ENCODE measurements at regions of chr19 and their contacts with region 1.

Region 1: DNA sequence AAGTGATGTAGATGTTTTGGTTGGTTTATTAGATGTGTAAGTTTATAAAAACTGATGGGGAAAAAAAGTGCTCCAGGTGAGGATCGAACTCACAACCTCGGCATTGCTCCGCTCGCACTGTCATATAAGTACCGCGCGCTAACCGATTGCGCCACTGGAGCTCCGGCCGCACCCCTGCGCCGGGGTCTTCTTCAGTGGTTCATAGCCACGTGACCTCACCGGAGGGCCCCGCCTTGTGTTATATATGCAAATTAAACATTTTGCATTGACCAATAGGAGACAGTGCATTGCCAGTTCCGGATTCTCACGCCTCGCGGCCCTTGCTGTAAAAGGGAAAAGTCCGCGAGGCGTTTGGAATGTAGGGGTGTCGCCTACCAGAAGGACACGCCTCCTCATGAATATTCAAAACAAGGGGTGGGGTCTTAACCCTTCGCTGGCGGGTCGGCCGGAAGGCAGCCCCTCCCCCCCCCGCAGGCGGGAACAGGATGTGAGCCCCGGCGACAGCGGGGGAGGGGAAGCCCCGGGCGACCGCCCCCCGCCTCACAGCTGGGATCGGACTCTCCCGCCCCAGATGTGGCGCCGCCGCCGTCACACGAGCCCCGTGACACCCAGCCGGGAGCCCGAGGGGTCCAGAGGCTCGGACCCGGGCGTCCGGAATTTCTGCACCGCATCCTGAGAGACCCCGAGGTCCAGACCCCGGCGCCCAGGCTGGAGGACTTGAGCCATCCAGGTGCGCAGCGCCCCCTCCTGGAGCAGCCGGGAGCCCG is at the start of gene PLEKHG2:
- DNase-seq: peak; percentile 97
- H3K4me3 ChIP-seq: peak within 1 kb of the TSS; percentile 92
- H3K27ac ChIP-seq: 0 out of 2 replicates have a peak within 1 kb of the TSS, but pooled peaks have one; percentile 93
- H3K4me1 ChIP-seq: peaks cover 30% of the 10 kb centered on the region
- H3K27me3 ChIP-seq: no peaks in the 10 kb centered on the region
- CTCF ChIP-seq: peak; percentile 92
- total RNA-seq, gene PLEKHG2: 26.1 and 32.1 TPM in 2 replicates

Region 2: GRCh38 chr19:39031368-39032062 is 380.8 kb before region 1 on chr19:
- CTCF ChIA-PET with region 1: no interaction called
- POLR2A ChIA-PET with region 1: no interaction called
- intact Hi-C with region 1: loop called (anchors 5 kb)
- DNase-seq: peak; percentile 94 to 99
- H3K4me3 ChIP-seq: peak overlapping the region; percentile 77
- H3K27ac ChIP-seq: peak overlapping the region; percentile 76
- H3K4me1 ChIP-seq: peaks cover 25% of the 10 kb centered on the region
- H3K27me3 ChIP-seq: no peaks in the 10 kb centered on the region
- CTCF ChIP-seq: no peak

Region 3: GRCh38 chr19:39125554-39126311 is 286.6 kb before region 1 on chr19 and contains the start of gene PAK4:
- CTCF ChIA-PET with region 1: no interaction called
- POLR2A ChIA-PET with region 1: no interaction called
- intact Hi-C with region 1: loop called (anchors 1 kb)
- DNase-seq: peak; percentile 92 to 97
- H3K4me3 ChIP-seq: peak within 1 kb of the TSS; percentile 80
- H3K27ac ChIP-seq: peak within 1 kb of the TSS; percentile 27; the same call in 1 of the 2 replicates
- H3K4me1 ChIP-seq: peaks cover 9% of the 10 kb centered on the region
- H3K27me3 ChIP-seq: no peaks in the 10 kb centered on the region
- CTCF ChIP-seq: no peak
- total RNA-seq, gene PAK4: 77.8 and 90.2 TPM in 2 replicates

Region 4: GRCh38 chr19:39277612-39278011 is 134.7 kb before region 1 on chr19:
- CTCF ChIA-PET with region 1: no interaction called
- POLR2A ChIA-PET with region 1: no interaction called
- intact Hi-C with region 1: no loop called
- DNase-seq: peak; percentile 43 to 77
- H3K4me3 ChIP-seq: no peak overlapping the region
- H3K27ac ChIP-seq: no peak overlapping the region
- H3K4me1 ChIP-seq: peaks cover 5% of the 10 kb centered on the region; the same call in 1 of the 2 replicates
- H3K27me3 ChIP-seq: no peaks in the 10 kb centered on the region
- CTCF ChIP-seq: no peak

Region 5: GRCh38 chr19:39341719-39342604 is 70.3 kb before region 1 on chr19 and contains the start of gene SAMD4B:
- CTCF ChIA-PET with region 1: interaction called, 4 read pairs
- POLR2A ChIA-PET with region 1: interaction called, 6 read pairs
- intact Hi-C with region 1: loop called (anchors 1 kb)
- DNase-seq: peak; percentile 87 to 99
- H3K4me3 ChIP-seq: peak within 1 kb of the TSS; percentile 89
- H3K27ac ChIP-seq: peak within 1 kb of the TSS; percentile 34
- H3K4me1 ChIP-seq: peaks cover 16% of the 10 kb centered on the region
- H3K27me3 ChIP-seq: no peaks in the 10 kb centered on the region
- CTCF ChIP-seq: peak; percentile 65
- total RNA-seq, gene SAMD4B: 152 and 163 TPM in 2 replicates

Region 6: GRCh38 chr19:39372047-39372802 is 40.1 kb before region 1 on chr19:
- CTCF ChIA-PET with region 1: no interaction called
- POLR2A ChIA-PET with region 1: no interaction called
- intact Hi-C with region 1: no loop called
- DNase-seq: no peak
- H3K4me3 ChIP-seq: no peak overlapping the region
- H3K27ac ChIP-seq: no peak overlapping the region
- H3K4me1 ChIP-seq: no peaks in the 10 kb centered on the region
- H3K27me3 ChIP-seq: no peaks in the 10 kb centered on the region
- CTCF ChIP-seq: no peak

Region 7: DNA sequence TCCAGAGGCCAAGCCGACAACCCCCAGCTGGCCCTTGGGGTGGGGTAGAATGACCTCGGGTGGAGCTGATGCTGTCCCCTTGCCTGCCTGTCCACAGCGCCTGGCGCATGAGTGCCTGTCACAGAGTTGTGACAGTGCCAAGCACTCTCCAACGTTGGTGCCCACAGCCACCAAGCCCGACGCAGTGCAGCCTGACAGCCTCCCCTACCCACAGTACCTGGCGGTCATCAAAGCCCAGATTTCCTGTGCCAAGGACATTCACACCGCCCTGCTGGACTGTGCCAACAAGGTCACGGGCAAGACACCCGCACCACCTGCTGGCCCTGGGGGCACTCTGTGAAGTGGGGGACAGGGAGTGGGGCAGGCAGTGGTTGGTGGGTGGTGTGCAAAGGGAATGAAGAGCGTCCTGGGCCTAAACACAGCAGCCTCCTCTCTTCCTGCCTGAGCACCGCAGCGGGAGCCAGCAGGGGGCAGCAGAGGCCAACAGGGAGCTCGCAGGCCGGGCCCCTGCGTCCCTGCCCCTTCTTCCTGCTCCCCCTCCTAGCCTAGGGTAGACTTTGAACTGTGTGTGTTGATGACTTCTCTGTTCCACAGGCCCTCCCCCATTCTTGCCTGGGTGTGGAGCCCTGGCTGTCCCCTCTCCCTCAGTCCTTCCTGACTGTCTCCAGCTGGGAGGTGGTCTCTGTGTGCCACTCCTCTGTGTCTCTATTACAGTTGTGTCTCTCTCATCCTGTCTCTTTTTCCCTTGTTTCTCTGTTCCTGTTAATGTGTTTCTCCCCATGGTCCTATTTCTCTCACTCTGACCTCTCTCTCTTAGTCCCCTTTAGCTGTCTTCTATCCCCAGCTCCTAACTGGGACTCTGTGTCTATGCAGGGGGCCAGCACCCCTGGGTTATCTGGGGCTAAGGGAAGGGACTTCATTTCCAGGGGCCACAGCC is 14.7 kb before region 1 on chr19:
- CTCF ChIA-PET with region 1: interaction called, 8 read pairs
- POLR2A ChIA-PET with region 1: interaction called, 18 read pairs
- intact Hi-C with region 1: loop called (anchors 1 kb)
- DNase-seq: peak; percentile 60 to 85
- H3K4me3 ChIP-seq: peak overlapping the region; percentile 17; the same call in 1 of the 2 replicates
- H3K27ac ChIP-seq: peak overlapping the region; percentile 95
- H3K4me1 ChIP-seq: peaks cover 24% of the 10 kb centered on the region
- H3K27me3 ChIP-seq: no peaks in the 10 kb centered on the region
- CTCF ChIP-seq: peak; percentile 93

Region 8: GRCh38 chr19:39445265-39446111 is 33.2 kb after region 1 on chr19 and contains the start of gene SUPT5H:
- CTCF ChIA-PET with region 1: no interaction called
- POLR2A ChIA-PET with region 1: interaction called, 3 read pairs
- intact Hi-C with region 1: loop called (anchors 1 kb)
- DNase-seq: peak; percentile 94 to 95
- H3K4me3 ChIP-seq: peak within 1 kb of the TSS; percentile 83
- H3K27ac ChIP-seq: peak within 1 kb of the TSS; percentile 97
- H3K4me1 ChIP-seq: peaks cover 30% of the 10 kb centered on the region
- H3K27me3 ChIP-seq: no peaks in the 10 kb centered on the region
- CTCF ChIP-seq: no peak
- total RNA-seq, gene SUPT5H: 99.7 and 118 TPM in 2 replicates

Region 9: GRCh38 chr19:39532233-39533002 is 120.1 kb after region 1 on chr19 and contains the start of gene EID2B:
- CTCF ChIA-PET with region 1: no interaction called
- POLR2A ChIA-PET with region 1: no interaction called
- intact Hi-C with region 1: loop called (anchors 1 kb)
- DNase-seq: peak; percentile 82 to 92
- H3K4me3 ChIP-seq: peak within 1 kb of the TSS; percentile 91
- H3K27ac ChIP-seq: no peak within 1 kb of the TSS
- H3K4me1 ChIP-seq: peaks cover 10% of the 10 kb centered on the region; the same call in 1 of the 2 replicates
- H3K27me3 ChIP-seq: no peaks in the 10 kb centered on the region
- CTCF ChIP-seq: peak; percentile 94
- total RNA-seq, gene EID2B: 2.3 and 3.4 TPM in 2 replicates

Measured in PC-9 (cell line).